SK-N-SH (cell line): ENCODE measurements at regions of chr1 and their contacts with region 1.

Region 1: GRCh38 chr1:205919026-205919746 is 24.1 kb downstream of the SLC26A9 start:
- DNase-seq: peak; percentile 79
- H3K4me3 ChIP-seq: no peak overlapping the region; a peak in 1 of 4 replicates
- H3K27ac ChIP-seq: no peak overlapping the region
- H3K4me1 ChIP-seq: peaks cover 0 to 7% of the 10 kb centered on the region in 2 experiments; a peak in 1 of 4 replicates
- H3K27me3 ChIP-seq: no peaks in the 10 kb centered on the region
- CTCF ChIP-seq: peak; percentile 81
- EP300 ChIP-seq: no peak
- RAD21 ChIP-seq: peak; percentile 92

Region 2: GRCh38 chr1:205896320-205896719 is 22.9 kb before region 1 on chr1:
- CTCF ChIA-PET with region 1: interaction called, 14 read pairs
- POLR2A ChIA-PET with region 1: no interaction called
- DNase-seq: no peak
- H3K4me3 ChIP-seq: no peak overlapping the region
- H3K27ac ChIP-seq: no peak overlapping the region
- H3K4me1 ChIP-seq: peaks cover 0 to 8% of the 10 kb centered on the region in 2 experiments; a peak in 2 of 4 replicates
- H3K27me3 ChIP-seq: no peaks in the 10 kb centered on the region
- CTCF ChIP-seq: no peak
- EP300 ChIP-seq: no peak
- RAD21 ChIP-seq: no peak

Region 3: DNA sequence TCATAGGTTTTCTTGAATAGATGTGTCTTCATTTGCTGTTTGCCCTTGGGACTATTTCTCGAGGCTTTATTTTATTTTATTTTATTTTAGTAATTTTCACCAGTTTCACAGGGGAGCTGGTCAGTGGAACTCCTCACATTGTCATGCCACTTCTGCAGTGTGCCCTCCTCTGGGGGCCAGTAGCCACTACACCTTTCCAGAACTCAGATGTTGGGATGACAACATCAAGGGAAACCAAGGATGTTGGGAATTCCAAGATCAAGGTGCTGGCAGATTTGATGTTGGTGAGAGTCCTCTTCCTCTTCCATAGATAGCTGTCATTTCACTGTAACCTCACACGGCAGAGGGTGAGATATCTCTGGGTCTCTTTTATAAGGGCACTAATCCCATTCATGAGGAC is 11.4 kb before region 1 on chr1:
- CTCF ChIA-PET with region 1: interaction called, 30 read pairs
- POLR2A ChIA-PET with region 1: no interaction called
- DNase-seq: peak; percentile 20
- H3K4me3 ChIP-seq: no peak overlapping the region
- H3K27ac ChIP-seq: no peak overlapping the region
- H3K4me1 ChIP-seq: no peaks in the 10 kb centered on the region
- H3K27me3 ChIP-seq: no peaks in the 10 kb centered on the region
- CTCF ChIP-seq: peak; percentile 68
- EP300 ChIP-seq: no peak
- RAD21 ChIP-seq: peak; percentile 67

Region 4: DNA sequence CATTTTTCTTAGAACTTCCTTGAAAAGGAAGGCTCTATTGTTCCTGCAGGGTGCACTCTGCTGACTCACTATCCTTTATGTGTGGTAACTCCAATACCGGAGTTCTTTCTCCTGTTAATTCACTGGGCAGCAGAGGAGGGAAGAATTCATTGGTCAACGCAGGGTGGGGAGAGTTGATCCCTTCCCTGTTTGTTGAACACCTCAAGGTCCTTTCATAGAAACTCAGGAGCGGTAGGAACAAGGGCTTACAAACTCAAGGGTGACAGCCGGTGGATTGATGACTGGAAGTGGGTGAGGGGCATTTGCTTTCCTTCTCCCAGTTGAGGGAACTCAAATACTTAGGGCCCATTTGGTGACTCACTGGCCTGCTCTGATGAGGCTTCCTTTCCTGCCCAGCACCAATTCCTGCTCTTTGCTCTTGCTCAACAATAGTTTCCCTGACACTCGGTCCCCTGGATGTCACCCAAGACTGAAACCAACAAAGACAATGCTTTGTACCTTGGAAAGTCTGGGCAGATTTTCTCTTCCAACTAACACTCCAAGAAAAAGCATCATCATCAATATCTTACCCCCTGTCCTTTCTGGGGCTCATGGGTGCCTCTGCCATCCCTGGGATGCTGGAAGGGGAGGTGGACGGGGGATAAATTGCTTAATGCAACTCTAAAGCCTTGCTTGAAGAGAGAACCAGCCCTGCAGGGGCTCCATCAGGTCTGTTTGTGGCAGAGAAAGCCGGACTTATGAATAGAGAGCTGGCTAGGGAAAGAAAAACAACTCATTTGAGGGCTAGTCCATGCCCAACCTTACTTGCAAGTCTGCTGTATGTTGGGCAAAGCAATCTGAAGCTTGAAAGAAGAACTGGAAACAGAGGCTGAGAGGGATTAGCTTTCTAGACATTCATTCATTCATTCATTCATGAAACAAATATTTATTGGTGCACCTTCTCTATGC is 14.8 kb after region 1 on chr1:
- CTCF ChIA-PET with region 1: interaction called, 28 read pairs
- POLR2A ChIA-PET with region 1: no interaction called
- DNase-seq: no peak
- H3K4me3 ChIP-seq: no peak overlapping the region
- H3K27ac ChIP-seq: peak overlapping the region in 1 of 2 experiments; percentile 12; a peak in 1 of 4 replicates
- H3K4me1 ChIP-seq: peaks cover 0 to 11% of the 10 kb centered on the region in 2 experiments; a peak in 2 of 4 replicates
- H3K27me3 ChIP-seq: 0 out of 2 replicates have a peak, but pooled peaks cover 6% of the 10 kb centered on the region
- CTCF ChIP-seq: no peak
- EP300 ChIP-seq: no peak
- RAD21 ChIP-seq: no peak

Region 5: DNA sequence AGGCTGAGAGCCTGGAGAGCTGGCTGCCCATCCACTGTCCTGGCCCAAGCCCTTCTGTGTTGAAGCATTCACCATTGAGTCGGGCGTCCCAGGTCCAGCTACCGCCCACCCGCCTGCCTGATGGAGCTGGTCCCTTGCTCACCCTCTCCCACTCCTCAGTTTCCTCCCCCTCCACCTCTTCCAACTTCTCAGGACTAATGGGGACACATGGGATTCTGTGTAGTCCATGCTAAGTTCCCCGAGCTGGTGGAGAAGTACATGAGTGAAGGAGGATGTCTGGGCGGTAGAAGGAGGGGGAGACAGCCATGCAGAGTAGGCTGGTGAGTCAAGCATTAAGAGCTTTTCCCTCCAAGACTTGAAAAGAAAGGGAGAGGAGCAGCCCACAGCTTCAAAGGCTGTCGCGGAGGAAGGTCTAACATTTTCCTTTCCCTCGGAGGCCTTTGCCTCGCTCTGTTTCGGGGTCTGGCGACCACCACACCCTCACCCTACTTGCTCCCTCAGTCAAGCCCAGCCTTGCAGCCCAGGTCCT is 23.5 kb after region 1 on chr1:
- CTCF ChIA-PET with region 1: interaction called, 20 read pairs
- POLR2A ChIA-PET with region 1: no interaction called
- DNase-seq: no peak
- H3K4me3 ChIP-seq: no peak overlapping the region
- H3K27ac ChIP-seq: no peak overlapping the region
- H3K4me1 ChIP-seq: no peaks in the 10 kb centered on the region; a peak in 1 of 4 replicates
- H3K27me3 ChIP-seq: peaks cover 19% of the 10 kb centered on the region; the same call in 1 of the 2 replicates
- CTCF ChIP-seq: no peak
- EP300 ChIP-seq: no peak
- RAD21 ChIP-seq: no peak

Region 6: GRCh38 chr1:205967555-205968335 is 48.6 kb after region 1 on chr1:
- CTCF ChIA-PET with region 1: interaction called, 25 read pairs
- POLR2A ChIA-PET with region 1: no interaction called
- DNase-seq: no peak
- H3K4me3 ChIP-seq: no peak overlapping the region
- H3K27ac ChIP-seq: no peak overlapping the region
- H3K4me1 ChIP-seq: no peaks in the 10 kb centered on the region
- H3K27me3 ChIP-seq: no peaks in the 10 kb centered on the region
- CTCF ChIP-seq: no peak
- EP300 ChIP-seq: no peak
- RAD21 ChIP-seq: no peak

Region 7: DNA sequence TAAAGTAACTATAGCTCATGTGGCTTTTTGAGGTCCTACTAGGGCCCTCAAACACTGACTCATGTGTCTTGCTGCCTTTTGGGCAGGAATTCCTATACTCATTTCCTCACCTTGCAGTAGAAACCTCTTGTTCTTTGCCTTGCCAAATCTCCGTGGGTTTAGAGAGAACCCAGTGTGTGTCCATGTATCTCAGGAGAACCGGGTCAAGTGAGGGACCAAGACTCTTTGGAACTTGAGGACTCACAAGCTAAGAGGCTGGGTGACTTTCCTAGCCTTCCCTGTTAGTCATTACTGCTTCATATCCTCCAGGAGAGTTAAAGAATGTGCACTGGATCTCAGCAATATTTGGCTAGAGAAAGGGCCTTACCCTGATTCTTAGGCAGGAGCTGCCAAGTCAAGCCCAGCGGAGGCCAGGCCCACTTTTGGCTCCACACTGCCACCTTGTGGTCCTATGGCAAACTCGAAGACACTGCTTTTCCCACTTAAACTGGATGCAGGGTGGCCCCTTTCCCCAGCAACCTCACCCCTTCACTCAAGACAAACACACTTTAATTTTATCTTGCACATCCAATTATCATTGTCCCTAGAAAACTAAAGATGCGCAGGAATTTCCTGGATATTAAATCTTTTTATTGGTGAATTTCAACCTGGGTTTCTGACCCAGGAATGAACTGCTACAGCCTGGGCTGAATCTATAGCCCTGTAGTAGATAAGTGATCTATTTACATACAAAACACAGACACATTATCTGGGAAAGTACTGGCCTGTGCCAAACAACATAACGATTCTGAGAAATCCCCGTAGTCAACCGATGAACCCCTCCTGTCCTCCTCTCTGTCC is 187.4 kb after region 1 on chr1:
- CTCF ChIA-PET with region 1: interaction called, 68 read pairs
- POLR2A ChIA-PET with region 1: no interaction called
- DNase-seq: peak; percentile 84
- H3K4me3 ChIP-seq: no peak overlapping the region; a peak in 1 of 4 replicates
- H3K27ac ChIP-seq: no peak overlapping the region
- H3K4me1 ChIP-seq: no peaks in the 10 kb centered on the region
- H3K27me3 ChIP-seq: peaks cover 11% of the 10 kb centered on the region; the same call in 1 of the 2 replicates
- CTCF ChIP-seq: peak; percentile 90
- EP300 ChIP-seq: no peak
- RAD21 ChIP-seq: peak; percentile 92